ENCODE measurements at regions of chr1 and their contacts with region 1.

Region 1: DNA sequence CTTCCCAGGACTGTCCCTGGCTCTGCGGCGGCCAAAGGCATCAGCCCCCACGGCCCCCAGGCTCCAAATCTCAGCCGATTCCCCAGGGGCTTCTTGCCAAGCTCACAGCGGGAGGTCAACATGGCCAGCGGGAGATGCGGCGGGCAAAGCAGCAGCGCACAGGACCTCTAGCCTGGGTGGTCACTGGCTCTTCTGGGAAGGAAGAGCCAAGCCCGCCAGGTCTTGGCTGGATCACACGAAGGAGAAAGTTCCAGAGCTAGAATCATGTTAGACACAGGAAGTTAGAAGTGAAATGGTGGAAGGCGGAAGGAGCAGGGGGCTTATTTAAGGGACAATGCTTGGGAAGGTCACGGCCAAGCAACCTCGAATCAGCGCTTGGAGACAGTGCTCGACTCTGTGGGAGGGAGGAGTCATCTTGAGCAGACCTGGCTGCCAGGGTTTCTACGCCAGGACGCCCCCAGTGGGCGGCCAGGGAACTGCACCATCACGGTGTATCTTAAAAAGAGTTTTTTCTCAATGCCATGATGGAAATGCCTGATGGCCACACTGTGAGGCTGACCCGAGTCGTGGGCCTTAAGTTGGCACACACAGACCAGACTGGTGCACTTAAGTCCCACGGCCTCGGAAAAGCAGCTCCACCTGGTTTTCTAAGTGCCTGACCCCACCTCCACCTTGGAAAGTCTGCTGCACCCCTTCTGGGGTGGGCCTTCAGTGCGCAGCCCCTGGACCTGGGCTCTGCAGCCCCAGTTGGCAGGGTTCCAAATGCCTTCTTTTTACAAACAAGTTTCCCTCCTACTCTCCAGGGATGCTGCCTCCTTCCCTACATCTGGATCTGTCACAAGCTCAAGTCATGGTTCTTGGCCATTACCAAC is 29.3 kb downstream of the SLC66A1 start:
- DNase-seq: peak; percentile 64
- H3K4me3 Mint-ChIP-seq: no peak overlapping the region
- H3K27ac Mint-ChIP-seq: peak overlapping the region; percentile 51
- H3K4me1 Mint-ChIP-seq: peaks cover 14% of the 10 kb centered on the region
- H3K27me3 Mint-ChIP-seq: no peaks in the 10 kb centered on the region

Region 2: GRCh38 chr1:19582302-19582701 is 240.9 kb after region 1 on chr1:
- intact Hi-C with region 1: loop called (anchors 5 kb)
- DNase-seq: peak; percentile 63
- H3K4me3 Mint-ChIP-seq: no peak overlapping the region
- H3K27ac Mint-ChIP-seq: no peak overlapping the region
- H3K4me1 Mint-ChIP-seq: peaks cover 11% of the 10 kb centered on the region
- H3K27me3 Mint-ChIP-seq: peaks cover 8% of the 10 kb centered on the region

Region 3: GRCh38 chr1:19651141-19651737 is 309.8 kb after region 1 on chr1:
- intact Hi-C with region 1: loop called (anchors 5 kb)
- DNase-seq: peak; percentile 41
- H3K4me3 Mint-ChIP-seq: no peak overlapping the region
- H3K27ac Mint-ChIP-seq: no peak overlapping the region
- H3K4me1 Mint-ChIP-seq: peaks cover 25% of the 10 kb centered on the region
- H3K27me3 Mint-ChIP-seq: no peaks in the 10 kb centered on the region

Measured in activated T-helper 2 cell treated with anti-CD3 and anti-CD28 coated beads, Interferon-gamma antibody, Interleukin-2, Interleukin-4, amounts not matched to agents 10 μg/mL and 5 μg/mL and 100 μg/mL, durations not matched to agents 14 hours and 24 hours and 36 hours (primary cell).